ENCODE measurements at regions of chr10 and their contacts with region 1.

Region 1: GRCh38 chr10:74275755-74276290 is 124.8 kb downstream of the ADK start:
- DNase-seq: no peak
- H3K4me3 ChIP-seq: no peak overlapping the region
- H3K27ac ChIP-seq: no peak overlapping the region
- H3K4me1 ChIP-seq: no peaks in the 10 kb centered on the region
- H3K27me3 ChIP-seq: no peaks in the 10 kb centered on the region
- CTCF ChIP-seq: no peak
- EP300 ChIP-seq: no peak
- POLR2A ChIP-seq: no peak
- RAD21 ChIP-seq: no peak

Region 2: DNA sequence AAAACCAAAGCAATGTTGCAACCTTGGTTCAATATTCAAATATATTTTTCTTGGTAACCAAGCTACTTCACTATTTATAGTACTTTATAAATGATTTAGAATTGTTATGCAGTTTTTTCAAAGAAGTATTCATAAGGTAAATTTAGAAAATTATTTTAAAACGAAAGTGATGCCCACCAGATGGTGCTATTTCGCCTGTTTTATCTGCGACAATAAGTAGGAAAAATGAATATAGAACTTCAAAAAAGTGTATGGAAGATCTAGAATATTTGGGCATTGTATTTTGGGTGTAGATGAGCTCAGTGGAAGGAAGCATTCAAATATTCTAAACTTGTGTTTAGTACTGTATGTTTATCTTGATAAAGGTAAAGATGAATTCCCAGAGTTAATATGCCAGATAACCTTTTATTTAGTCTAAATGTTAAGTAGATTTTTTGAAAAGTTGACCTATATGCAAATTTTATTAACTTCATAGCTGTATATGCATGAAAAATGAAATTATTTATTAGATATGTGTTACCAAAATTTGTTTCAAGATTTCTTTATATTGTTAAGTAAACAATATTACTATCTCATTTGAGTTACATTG is 31.6 kb before region 1 on chr10:
- CTCF ChIA-PET with region 1: interaction called, 10 read pairs
- POLR2A ChIA-PET with region 1: no interaction called
- DNase-seq: no peak
- H3K4me3 ChIP-seq: no peak overlapping the region
- H3K27ac ChIP-seq: no peak overlapping the region
- H3K4me1 ChIP-seq: no peaks in the 10 kb centered on the region
- H3K27me3 ChIP-seq: no peaks in the 10 kb centered on the region
- CTCF ChIP-seq: peak in 1 of 3 experiments; percentile 16; a peak in 2 of 4 replicates
- EP300 ChIP-seq: no peak
- POLR2A ChIP-seq: no peak
- RAD21 ChIP-seq: peak in 1 of 2 experiments; percentile 49